ENCODE measurements at regions of chr5 and their contacts with region 1.

Region 1: GRCh38 chr5:54852007-54852406 is 133.4 kb downstream of the ESM1 start:
- DNase-seq: no peak
- CTCF ChIP-seq: no peak

Region 2: GRCh38 chr5:54520438-54520846 is 331.6 kb before region 1 on chr5:
- in situ Hi-C with region 1: loop called (anchors 10 kb)
- DNase-seq: no peak
- CTCF ChIP-seq: no peak

Region 3: GRCh38 chr5:54959673-54960418 is 107.8 kb after region 1 on chr5:
- in situ Hi-C with region 1: no loop called
- DNase-seq: no peak
- CTCF ChIP-seq: peak; percentile 38

Region 4: DNA sequence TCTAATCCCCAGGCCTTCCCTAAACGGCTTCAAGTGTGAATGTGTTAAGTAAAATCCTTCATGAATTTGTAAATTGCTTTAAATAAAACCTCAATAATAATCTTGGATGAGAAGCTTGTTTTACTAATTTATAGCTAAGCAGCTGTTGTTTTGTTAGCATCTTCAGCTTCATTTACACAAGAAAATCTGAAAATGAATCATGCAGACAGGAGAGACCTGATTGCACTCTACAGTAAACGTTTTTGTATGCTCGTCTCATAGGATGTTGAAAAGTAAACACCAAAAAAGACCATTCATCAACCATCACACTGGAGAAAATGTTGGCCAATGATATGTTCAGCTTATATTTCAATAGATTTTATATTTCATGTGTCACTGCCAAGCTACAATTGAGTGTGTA is 1923.0 kb after region 1 on chr5:
- in situ Hi-C with region 1: no loop called
- DNase-seq: no peak
- CTCF ChIP-seq: no peak

Measured in GM13977 (cell line).